ENCODE measurements at regions of chr15 and their contacts with region 1.

Region 1: DNA sequence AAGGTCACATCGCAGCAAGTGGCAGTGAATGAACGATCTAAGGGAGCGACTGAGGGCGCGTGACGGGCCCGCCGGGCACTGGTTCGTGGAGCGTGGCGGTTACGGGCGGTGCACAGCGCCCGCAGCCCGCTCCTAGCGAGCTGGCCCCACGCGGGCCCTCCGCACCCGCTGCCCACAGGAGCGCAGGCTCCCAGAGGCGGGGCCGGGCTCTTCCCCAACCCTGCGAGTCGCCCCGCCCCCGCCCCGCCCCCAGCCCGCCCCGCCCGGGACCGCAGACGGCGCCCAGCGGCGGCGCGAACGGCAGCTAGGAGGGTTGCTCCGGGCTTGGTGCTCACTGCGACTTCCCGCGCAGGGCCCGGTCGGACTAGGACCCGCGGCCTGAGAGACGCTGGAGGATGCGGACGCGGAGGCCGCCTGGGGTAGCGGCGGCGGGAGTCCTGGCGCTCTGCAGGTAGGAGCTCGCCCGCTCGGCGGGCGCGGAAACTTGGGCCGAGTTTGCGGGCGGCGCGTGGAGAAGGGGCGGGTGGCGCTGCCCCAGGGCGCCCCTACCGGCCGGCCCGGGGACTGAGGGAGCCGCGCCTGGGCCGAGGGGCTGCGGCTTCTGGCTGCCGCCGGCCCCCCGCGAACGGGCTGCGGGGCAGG is at the start of gene C15orf39:
- DNase-seq: peak; percentile 69 to 74
- H3K4me3 ChIP-seq: peak within 1 kb of the TSS; percentile 69 to 94 (median 88)
- H3K27ac ChIP-seq: peak within 1 kb of the TSS; percentile 93 to 96 (median 96)
- H3K4me1 ChIP-seq: peaks cover 34 to 48% of the 10 kb centered on the region in 2 donors
- H3K27me3 ChIP-seq: no peaks in the 10 kb centered on the region
- CTCF ChIP-seq: peak; percentile 33 to 98 (median 94)
- POLR2A ChIP-seq: peak; percentile 92 to 94
- total RNA-seq, gene C15orf39: 10.6 to 18.3 (median 16.7) TPM

Region 2: DNA sequence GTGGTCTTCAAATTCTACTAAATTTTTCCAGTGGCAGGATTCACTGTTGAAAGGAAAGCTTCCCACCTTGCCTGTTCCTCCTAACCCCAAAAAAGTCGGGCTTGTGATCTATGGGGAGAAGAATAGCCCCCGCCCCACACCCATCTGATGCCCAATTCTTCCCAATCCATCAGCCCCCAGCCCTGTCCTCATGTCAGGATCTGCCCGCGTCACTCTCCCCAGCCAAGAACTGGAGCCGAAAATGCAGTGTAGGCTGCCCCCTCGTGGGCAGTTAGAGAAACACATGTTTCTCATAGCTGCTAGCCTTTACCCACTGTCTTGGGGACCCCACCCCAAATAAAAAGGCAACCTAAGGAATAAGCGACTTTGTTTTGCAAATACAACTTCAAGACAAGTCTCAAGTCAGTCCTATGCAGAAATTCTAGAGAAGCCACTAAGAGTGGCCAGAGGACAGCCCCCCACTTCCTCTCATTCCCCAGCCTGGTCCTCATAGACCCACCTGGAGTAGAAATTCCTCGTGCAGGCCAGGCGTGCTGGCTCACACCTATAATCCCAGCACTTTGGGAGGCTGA is 432.9 kb before region 1 on chr15:
- intact Hi-C with region 1: no loop called
- DNase-seq: peak; percentile 67 to 74
- H3K4me3 ChIP-seq: no peak overlapping the region
- H3K27ac ChIP-seq: no peak overlapping the region
- H3K4me1 ChIP-seq: peaks cover 0 to 8% of the 10 kb centered on the region in 2 donors
- H3K27me3 ChIP-seq: no peaks in the 10 kb centered on the region
- CTCF ChIP-seq: peak; percentile 42 to 87 (median 76)
- POLR2A ChIP-seq: no peak

Region 3: GRCh38 chr15:75029378-75030022 is 172.2 kb before region 1 on chr15:
- intact Hi-C with region 1: loop called (anchors 2 kb)
- DNase-seq: peak; percentile 93 to 95
- H3K4me3 ChIP-seq: no peak overlapping the region
- H3K27ac ChIP-seq: peak overlapping the region; percentile 54 to 76 (median 72)
- H3K4me1 ChIP-seq: peaks cover 15 to 35% of the 10 kb centered on the region in 2 donors
- H3K27me3 ChIP-seq: no peaks in the 10 kb centered on the region
- CTCF ChIP-seq: peak; percentile 82 to 97 (median 91)
- POLR2A ChIP-seq: no peak

Region 4: GRCh38 chr15:75554717-75555116 is 353.0 kb after region 1 on chr15:
- intact Hi-C with region 1: no loop called
- DNase-seq: no peak
- H3K4me3 ChIP-seq: no peak overlapping the region
- H3K27ac ChIP-seq: no peak overlapping the region
- H3K4me1 ChIP-seq: peaks cover 0 to 1% of the 10 kb centered on the region in 2 donors
- H3K27me3 ChIP-seq: no peaks in the 10 kb centered on the region
- CTCF ChIP-seq: no peak
- POLR2A ChIP-seq: no peak

Measured in thyroid gland (tissue), 4 donors.